AG04450 (cell line): ENCODE measurements at regions of chr15 and their contacts with region 1.

Region 1: GRCh38 chr15:74635228-74635627 is 19.6 kb downstream of the CLK3 start:
- DNase-seq: no peak
- H3K4me3 ChIP-seq: no peak overlapping the region
- H3K27ac ChIP-seq: no peak overlapping the region
- H3K27me3 ChIP-seq: no peaks in the 10 kb centered on the region
- CTCF ChIP-seq: peak; percentile 89

Region 2: GRCh38 chr15:74382004-74382816 is 253.0 kb before region 1 on chr15:
- CTCF ChIA-PET with region 1: interaction called, 13 read pairs
- POLR2A ChIA-PET with region 1: no interaction called
- DNase-seq: no peak
- H3K4me3 ChIP-seq: no peak overlapping the region
- H3K27ac ChIP-seq: no peak overlapping the region
- H3K27me3 ChIP-seq: no peaks in the 10 kb centered on the region
- CTCF ChIP-seq: peak; percentile 98

Region 3: DNA sequence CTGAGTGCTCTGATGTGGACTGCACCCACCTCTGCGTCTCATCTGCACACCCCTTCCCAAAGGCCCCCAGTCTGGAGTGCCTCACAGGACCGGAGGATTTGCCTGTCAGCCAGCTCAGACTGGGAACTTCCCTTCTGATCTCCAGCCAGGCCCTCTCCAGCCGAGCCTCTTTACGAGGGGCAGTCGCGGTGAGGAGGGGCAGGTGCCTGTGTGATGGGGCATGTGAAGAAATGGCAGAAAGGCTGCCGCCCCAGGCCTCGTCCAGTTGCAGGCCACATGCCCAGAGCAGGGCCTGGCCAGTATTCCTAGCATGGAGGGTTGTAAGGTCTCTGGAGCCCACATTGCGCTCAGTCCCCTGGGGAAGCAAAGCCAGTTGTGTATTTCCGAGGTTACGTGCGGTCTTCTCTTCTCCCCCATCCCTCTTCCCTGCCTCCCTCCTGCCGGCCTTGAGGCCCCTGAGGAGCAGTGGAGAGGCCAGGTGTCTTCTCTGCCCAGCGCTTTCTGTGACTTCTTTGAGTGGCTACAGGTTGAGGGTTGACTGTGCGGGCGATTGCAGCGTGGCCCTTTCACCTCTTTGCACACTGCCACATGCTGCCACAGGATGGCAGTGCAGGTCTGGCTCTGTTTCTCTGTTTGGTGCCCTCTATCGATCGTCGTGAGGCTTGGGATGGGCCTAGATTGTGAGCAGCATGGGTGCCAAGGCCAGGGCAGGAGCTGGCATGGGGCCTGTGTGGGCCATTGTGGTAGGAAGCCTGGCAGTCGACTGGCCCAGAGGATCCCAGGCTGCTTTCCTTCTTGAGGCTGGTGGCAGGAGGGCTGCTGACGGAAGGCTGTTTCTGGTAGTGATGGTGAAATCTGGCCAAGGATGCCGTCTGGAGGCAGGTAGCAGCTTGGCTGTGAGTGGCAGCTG is 14.3 kb before region 1 on chr15:
- CTCF ChIA-PET with region 1: interaction called, 41 read pairs
- POLR2A ChIA-PET with region 1: no interaction called
- DNase-seq: no peak
- H3K4me3 ChIP-seq: no peak overlapping the region
- H3K27ac ChIP-seq: no peak overlapping the region
- H3K27me3 ChIP-seq: no peaks in the 10 kb centered on the region
- CTCF ChIP-seq: peak; percentile 93

Region 4: GRCh38 chr15:74680456-74680855 is 45.2 kb after region 1 on chr15:
- CTCF ChIA-PET with region 1: interaction called, 7 read pairs
- POLR2A ChIA-PET with region 1: interaction called, 11 read pairs
- DNase-seq: no peak
- H3K4me3 ChIP-seq: no peak overlapping the region
- H3K27ac ChIP-seq: no peak overlapping the region
- H3K27me3 ChIP-seq: no peaks in the 10 kb centered on the region
- CTCF ChIP-seq: no peak

Region 5: DNA sequence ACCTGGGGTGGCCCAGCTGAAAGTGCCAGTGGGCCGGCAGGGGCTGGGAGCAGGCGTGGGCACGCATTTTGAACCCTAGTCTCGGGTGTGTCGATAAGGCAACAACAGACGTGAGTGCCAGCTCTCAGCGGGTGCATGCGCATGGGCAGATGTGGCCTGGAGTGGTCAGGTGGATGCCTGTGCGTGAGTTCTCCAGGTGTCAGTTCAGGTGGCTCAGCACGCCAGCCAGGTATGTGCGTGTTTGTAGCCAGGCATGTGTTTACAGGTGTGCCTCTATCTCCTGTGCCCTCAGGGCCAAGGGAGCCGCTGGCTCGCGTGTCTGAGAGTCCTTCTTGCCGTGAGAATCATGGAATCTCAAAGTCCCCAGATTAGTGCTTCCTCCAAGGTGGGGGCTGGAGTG is 128.2 kb after region 1 on chr15:
- CTCF ChIA-PET with region 1: interaction called, 517 read pairs
- POLR2A ChIA-PET with region 1: interaction called, 3 read pairs
- DNase-seq: no peak
- H3K4me3 ChIP-seq: no peak overlapping the region
- H3K27ac ChIP-seq: no peak overlapping the region
- H3K27me3 ChIP-seq: peaks cover 17% of the 10 kb centered on the region
- CTCF ChIP-seq: no peak

Region 6: GRCh38 chr15:74781431-74782258 is 146.4 kb after region 1 on chr15 and contains the start of gene CSK:
- CTCF ChIA-PET with region 1: interaction called, 14 read pairs
- POLR2A ChIA-PET with region 1: no interaction called
- DNase-seq: no peak
- H3K4me3 ChIP-seq: peak within 1 kb of the TSS; percentile 90
- H3K27ac ChIP-seq: no peak within 1 kb of the TSS
- H3K27me3 ChIP-seq: no peaks in the 10 kb centered on the region
- CTCF ChIP-seq: peak; percentile 48
- polyA plus RNA-seq, gene CSK: 17.2 and 25.1 TPM in 2 replicates

Region 7: GRCh38 chr15:74928771-74929198 is 293.6 kb after region 1 on chr15:
- CTCF ChIA-PET with region 1: no interaction called
- POLR2A ChIA-PET with region 1: no interaction called
- DNase-seq: no peak
- H3K4me3 ChIP-seq: no peak overlapping the region
- H3K27ac ChIP-seq: no peak overlapping the region
- H3K27me3 ChIP-seq: no peaks in the 10 kb centered on the region
- CTCF ChIP-seq: no peak